Caco-2 (cell line): ENCODE measurements at regions of chr1 and their contacts with region 1.

Region 1: GRCh38 chr1:234772345-234773147 is 162.6 kb upstream of the IRF2BP2 start:
- DNase-seq: peak; percentile 87 to 95
- H3K4me3 ChIP-seq: no peak overlapping the region
- H3K4me3 Mint-ChIP-seq: peak overlapping the region; percentile 58
- H3K27ac Mint-ChIP-seq: peak overlapping the region; percentile 90
- H3K4me1 ChIP-seq: peaks cover 53% of the 10 kb centered on the region
- H3K4me1 Mint-ChIP-seq: peaks cover 51% of the 10 kb centered on the region
- H3K27me3 ChIP-seq: no peaks in the 10 kb centered on the region
- H3K27me3 Mint-ChIP-seq: no peaks in the 10 kb centered on the region
- CTCF ChIP-seq: no peak

Region 2: DNA sequence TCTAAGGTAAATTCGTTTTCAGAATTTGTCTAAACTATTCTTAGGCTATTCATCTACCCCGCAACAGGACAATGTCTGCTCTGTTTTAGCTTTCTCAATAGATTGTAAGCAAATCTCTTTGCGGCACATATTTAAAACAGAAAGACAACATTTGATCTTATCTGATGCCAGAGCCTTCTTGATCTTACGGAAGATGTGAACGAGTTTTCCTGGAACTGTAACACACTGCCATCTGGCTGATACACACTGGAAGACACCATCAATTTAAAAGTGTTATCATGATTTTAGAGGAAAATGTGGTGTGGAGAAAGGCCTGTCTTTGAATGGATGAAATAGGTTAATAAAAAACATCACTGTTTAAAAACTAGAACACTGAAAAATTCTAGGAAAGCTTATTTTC is 363.2 kb before region 1 on chr1:
- CTCF ChIA-PET with region 1: no interaction called
- POLR2A ChIA-PET with region 1: no interaction called
- intact Hi-C with region 1: no loop called
- DNase-seq: no peak
- H3K4me3 ChIP-seq: no peak overlapping the region
- H3K4me3 Mint-ChIP-seq: no peak overlapping the region
- H3K27ac Mint-ChIP-seq: no peak overlapping the region
- H3K4me1 ChIP-seq: no peaks in the 10 kb centered on the region
- H3K4me1 Mint-ChIP-seq: no peaks in the 10 kb centered on the region
- H3K27me3 ChIP-seq: no peaks in the 10 kb centered on the region
- H3K27me3 Mint-ChIP-seq: no peaks in the 10 kb centered on the region
- CTCF ChIP-seq: no peak

Region 3: GRCh38 chr1:234638832-234639799 is 133.4 kb before region 1 on chr1:
- CTCF ChIA-PET with region 1: no interaction called
- POLR2A ChIA-PET with region 1: no interaction called
- intact Hi-C with region 1: loop called (anchors 1 kb)
- DNase-seq: peak; percentile 90 to 93
- H3K4me3 ChIP-seq: no peak overlapping the region
- H3K4me3 Mint-ChIP-seq: peak overlapping the region; percentile 59
- H3K27ac Mint-ChIP-seq: peak overlapping the region; percentile 82
- H3K4me1 ChIP-seq: peaks cover 57% of the 10 kb centered on the region
- H3K4me1 Mint-ChIP-seq: peaks cover 42% of the 10 kb centered on the region
- H3K27me3 ChIP-seq: no peaks in the 10 kb centered on the region
- H3K27me3 Mint-ChIP-seq: no peaks in the 10 kb centered on the region
- CTCF ChIP-seq: no peak

Region 4: DNA sequence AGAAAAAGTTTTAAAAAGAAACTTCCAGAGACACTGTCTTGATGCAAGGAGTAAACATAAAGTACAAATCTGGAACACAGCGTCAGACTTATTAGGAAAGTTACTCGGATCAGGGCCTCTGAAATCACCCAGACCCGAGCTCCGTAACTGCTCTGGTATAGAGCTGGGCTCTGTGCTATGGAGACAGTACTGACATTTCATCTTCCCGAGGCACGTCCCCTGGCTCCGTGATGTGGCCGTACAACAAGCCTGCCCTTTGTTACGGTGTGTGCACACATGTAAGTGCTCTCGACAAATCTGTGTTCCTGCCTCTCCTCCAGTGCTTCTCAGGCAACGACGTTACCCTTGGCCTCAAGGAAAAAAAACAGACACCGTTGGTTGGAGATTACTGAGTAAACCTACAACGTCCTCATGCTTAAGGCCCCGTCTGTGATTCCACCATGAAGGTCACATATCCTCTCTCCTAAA is 55.6 kb before region 1 on chr1:
- CTCF ChIA-PET with region 1: no interaction called
- POLR2A ChIA-PET with region 1: no interaction called
- intact Hi-C with region 1: loop called (anchors 1 kb)
- DNase-seq: peak in 1 of 2 experiments; percentile 49
- H3K4me3 ChIP-seq: no peak overlapping the region
- H3K4me3 Mint-ChIP-seq: peak overlapping the region; percentile 52
- H3K27ac Mint-ChIP-seq: peak overlapping the region; percentile 86
- H3K4me1 ChIP-seq: peaks cover 90% of the 10 kb centered on the region
- H3K4me1 Mint-ChIP-seq: peaks cover 80% of the 10 kb centered on the region
- H3K27me3 ChIP-seq: no peaks in the 10 kb centered on the region
- H3K27me3 Mint-ChIP-seq: no peaks in the 10 kb centered on the region
- CTCF ChIP-seq: no peak

Region 5: DNA sequence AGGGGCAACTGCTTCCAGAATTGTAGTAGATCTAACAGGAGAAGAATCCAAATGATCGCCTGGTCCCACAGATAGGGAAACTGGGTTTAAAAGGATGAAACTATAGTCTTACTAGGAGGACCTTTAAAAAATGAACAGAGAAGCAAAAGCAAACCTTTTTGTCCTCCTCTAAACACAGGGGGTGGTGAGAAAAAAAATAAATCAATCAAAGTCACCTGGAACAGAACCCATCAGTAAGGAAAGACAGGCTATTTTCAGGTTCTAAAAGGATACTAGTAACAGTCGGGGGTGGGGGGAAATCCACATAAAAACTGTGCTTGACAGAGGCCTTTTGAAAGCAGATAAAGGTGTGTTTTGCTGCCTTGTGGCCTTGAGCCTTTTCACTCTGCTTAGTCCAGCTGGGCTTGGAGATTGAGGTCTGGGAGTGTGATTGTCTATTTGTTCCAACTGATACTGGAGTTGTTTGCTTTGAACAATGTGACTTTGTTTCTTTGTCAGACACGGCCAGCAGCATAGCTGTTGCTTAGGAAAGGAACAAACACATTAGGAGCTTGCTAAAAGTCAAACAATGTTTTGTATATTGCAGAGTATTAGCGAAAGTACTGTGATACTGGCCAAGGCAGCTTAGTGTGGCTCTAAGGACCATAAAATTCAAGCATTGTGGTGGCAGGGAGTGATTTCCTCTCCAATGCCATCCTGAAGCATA is 21.5 kb before region 1 on chr1:
- CTCF ChIA-PET with region 1: no interaction called
- POLR2A ChIA-PET with region 1: interaction called, 3 read pairs
- intact Hi-C with region 1: loop called (anchors 2 kb)
- DNase-seq: no peak
- H3K4me3 ChIP-seq: no peak overlapping the region
- H3K4me3 Mint-ChIP-seq: no peak overlapping the region
- H3K27ac Mint-ChIP-seq: no peak overlapping the region
- H3K4me1 ChIP-seq: peaks cover 23% of the 10 kb centered on the region
- H3K4me1 Mint-ChIP-seq: peaks cover 33% of the 10 kb centered on the region
- H3K27me3 ChIP-seq: no peaks in the 10 kb centered on the region
- H3K27me3 Mint-ChIP-seq: no peaks in the 10 kb centered on the region
- CTCF ChIP-seq: no peak

Region 6: DNA sequence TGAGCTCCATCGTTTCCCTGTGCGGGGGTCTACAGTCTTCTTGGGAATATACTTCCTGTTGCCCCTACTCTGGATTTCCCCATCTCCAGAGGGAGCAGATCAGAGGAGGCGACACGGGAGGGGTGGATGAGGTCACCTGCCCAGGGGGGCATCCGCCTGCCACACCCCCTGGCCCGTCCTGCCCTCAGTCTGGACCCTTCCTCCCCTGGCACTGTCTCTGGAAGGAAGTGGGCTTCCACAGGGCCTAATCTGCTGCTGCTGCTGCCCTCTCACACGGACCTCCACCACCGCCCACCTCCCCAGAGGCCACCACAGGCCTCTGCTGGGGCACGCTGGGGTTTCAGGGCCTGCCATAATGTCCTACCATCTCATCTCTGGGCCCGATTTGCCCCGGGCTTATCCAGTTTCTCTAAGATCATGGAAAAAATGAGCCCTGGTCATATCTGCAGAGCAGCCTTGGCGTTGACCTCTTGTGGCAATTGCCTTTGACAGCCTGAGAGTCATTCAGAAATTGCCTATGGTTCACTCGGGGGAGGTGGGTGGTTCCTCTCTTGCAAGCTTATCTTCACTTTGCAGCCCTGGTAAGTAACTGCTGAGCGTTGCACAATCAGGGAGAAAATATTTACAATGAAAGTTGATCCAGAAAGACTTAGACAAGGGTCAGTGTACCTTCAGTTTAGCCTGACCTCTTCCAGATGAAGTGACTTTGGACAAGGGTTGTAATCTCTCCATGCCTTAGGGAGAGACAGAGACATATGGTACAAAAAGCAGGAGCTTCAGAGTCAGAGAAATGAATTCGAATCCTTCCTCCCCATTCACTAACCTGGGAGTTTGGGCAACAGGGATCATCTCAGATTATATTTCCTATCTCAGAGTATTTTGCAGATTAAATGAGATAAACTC is 103.7 kb after region 1 on chr1:
- CTCF ChIA-PET with region 1: no interaction called
- POLR2A ChIA-PET with region 1: no interaction called
- intact Hi-C with region 1: loop called (anchors 5 kb)
- DNase-seq: peak; percentile 84 to 87
- H3K4me3 ChIP-seq: no peak overlapping the region
- H3K4me3 Mint-ChIP-seq: no peak overlapping the region
- H3K27ac Mint-ChIP-seq: peak overlapping the region; percentile 58
- H3K4me1 ChIP-seq: peaks cover 44% of the 10 kb centered on the region
- H3K4me1 Mint-ChIP-seq: peaks cover 35% of the 10 kb centered on the region
- H3K27me3 ChIP-seq: no peaks in the 10 kb centered on the region
- H3K27me3 Mint-ChIP-seq: no peaks in the 10 kb centered on the region
- CTCF ChIP-seq: no peak